ENCODE measurements at regions of chr7 and their contacts with region 1.

Region 1: DNA sequence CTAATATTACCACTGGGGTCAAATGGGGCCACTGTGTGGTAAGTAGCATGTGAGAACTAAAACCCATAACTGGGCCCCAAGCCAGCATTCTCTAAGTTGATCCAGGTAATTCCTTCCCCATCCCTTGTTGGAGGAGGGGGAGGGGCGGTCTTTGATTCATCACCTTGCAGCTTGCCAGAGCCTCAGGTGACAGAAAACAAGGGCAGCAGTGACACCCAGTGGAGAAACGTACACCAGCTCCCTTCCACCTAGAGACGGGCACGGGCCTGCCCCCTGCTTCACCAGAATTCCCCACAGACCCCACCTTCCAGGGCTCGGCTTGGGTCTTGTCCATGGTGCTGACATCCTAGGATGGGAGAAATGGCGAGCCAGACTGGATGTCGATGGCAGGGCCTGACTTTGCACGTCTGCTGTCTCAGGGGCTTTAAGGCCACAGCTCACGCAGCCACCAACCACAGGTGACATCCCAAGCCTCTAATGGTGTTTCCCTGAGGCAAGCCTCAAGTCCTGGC is 102.0 kb downstream of the STRA8 start:
- DNase-seq: peak; percentile 95
- H3K4me3 Mint-ChIP-seq: no peak overlapping the region
- H3K27ac Mint-ChIP-seq: no peak overlapping the region
- H3K4me1 Mint-ChIP-seq: peaks cover 8% of the 10 kb centered on the region
- H3K27me3 Mint-ChIP-seq: peaks cover 17% of the 10 kb centered on the region
- CTCF ChIP-seq: peak; percentile 78

Region 2: GRCh38 chr7:135274495-135275268 is 61.0 kb before region 1 on chr7:
- CTCF ChIA-PET with region 1: interaction called, 94 read pairs
- intact Hi-C with region 1: no loop called
- DNase-seq: peak; percentile 83
- H3K4me3 Mint-ChIP-seq: no peak overlapping the region
- H3K27ac Mint-ChIP-seq: no peak overlapping the region
- H3K4me1 Mint-ChIP-seq: no peaks in the 10 kb centered on the region
- H3K27me3 Mint-ChIP-seq: peaks cover 29% of the 10 kb centered on the region
- CTCF ChIP-seq: peak; percentile 76

Region 3: DNA sequence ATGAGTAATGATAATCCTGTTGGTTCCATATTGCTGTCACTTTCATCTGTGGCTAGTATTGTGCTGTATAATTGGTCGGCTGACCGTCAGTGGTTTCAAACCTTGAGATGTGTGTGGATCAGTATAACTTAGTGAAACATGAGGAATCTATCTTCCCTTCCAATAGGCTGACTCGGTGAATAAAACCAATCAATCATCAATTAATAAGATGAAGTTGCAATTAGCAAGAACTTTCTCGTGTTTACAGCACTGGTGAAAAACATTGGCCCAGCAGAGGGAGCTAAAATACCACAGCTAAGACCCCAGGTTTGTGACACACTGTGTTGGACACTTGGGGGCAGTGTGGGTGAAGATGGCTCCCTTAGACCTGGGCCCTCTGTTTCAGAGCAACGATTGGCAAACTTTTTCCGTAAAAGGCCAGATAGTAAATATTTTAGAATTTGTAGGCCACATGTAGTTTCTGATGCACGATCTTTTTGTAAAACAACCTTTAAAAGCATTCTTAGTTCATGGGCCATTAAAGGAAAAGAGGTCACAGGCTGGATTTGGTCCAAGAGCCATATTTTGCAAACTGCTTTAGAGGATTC is 54.2 kb before region 1 on chr7:
- CTCF ChIA-PET with region 1: interaction called, 94 read pairs
- intact Hi-C with region 1: loop called (anchors 1 kb)
- DNase-seq: peak; percentile 85
- H3K4me3 Mint-ChIP-seq: no peak overlapping the region
- H3K27ac Mint-ChIP-seq: no peak overlapping the region
- H3K4me1 Mint-ChIP-seq: no peaks in the 10 kb centered on the region
- H3K27me3 Mint-ChIP-seq: peaks cover 24% of the 10 kb centered on the region
- CTCF ChIP-seq: peak; percentile 93

Measured in Calu3 (cell line).